Dendritic cell treated with granulocyte-macrophage colony-stimulating factor and Interleukin-4, amounts not matched to agents 40 ng/mL and 50 ng/mL, for 4 days (primary cell): ENCODE measurements at regions of chr17 and their contacts with region 1.

Region 1: DNA sequence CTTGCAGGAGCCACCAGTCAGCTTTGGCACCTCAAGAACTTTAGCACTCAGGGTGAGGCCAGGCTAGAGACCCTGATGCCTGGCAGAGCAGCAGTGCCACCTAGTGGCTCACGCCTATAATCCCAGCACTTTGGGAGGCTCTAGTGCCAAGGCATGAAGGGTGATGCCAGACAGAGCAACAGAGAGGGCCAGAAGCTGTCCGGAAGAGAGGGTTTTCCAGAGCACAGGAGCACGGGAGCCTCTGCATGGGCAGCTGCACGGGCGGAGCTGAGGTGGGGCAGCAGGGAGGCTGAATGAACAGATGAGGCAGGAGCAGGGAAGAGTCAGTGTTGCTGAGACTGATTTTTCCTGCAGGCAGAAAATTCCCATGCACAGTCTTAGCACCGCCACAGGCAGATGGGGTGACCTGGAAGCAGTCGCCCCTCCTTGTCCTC is 38.9 kb downstream of the MYH3 start:
- H3K4me3 Mint-ChIP-seq: no peak overlapping the region
- H3K27ac Mint-ChIP-seq: no peak overlapping the region
- H3K4me1 Mint-ChIP-seq: peaks cover 10% of the 10 kb centered on the region
- H3K27me3 Mint-ChIP-seq: no peaks in the 10 kb centered on the region

Region 2: GRCh38 chr17:9924735-9925191 is 693.5 kb before region 1 on chr17:
- intact Hi-C with region 1: loop called (anchors 10 kb)
- H3K4me3 Mint-ChIP-seq: no peak overlapping the region
- H3K27ac Mint-ChIP-seq: no peak overlapping the region
- H3K4me1 Mint-ChIP-seq: peaks cover 5% of the 10 kb centered on the region
- H3K27me3 Mint-ChIP-seq: no peaks in the 10 kb centered on the region

Region 3: DNA sequence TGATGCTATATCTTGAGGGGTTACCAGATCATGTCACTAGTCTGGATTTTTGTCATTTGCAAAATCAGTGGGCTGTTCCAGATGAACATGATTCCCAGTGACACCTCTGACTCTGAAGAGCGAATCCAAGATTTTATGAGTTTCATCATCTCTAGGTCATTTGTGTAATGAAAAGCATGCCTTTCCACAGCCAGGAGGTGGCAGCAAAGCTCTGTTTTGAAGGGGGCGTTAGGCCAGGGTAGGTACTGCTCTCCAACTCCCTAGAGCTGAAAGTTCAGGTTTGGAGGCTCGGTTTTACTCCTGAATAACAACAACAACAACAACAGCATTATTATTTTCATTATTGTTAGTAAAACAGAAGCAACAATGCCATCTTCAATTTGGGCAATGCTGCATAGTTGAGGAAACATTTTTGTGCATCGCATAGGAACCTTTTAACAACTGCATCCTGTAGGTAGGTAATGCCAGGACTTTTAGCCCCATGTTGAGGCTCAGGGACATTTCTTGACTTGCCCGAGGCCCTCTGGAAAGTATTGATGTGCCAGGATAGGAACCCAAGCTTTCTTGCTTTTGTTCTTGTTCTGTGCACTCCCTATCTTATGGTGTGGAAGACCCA is 322.4 kb before region 1 on chr17:
- intact Hi-C with region 1: loop called (anchors 2 kb)
- H3K4me3 Mint-ChIP-seq: no peak overlapping the region
- H3K27ac Mint-ChIP-seq: no peak overlapping the region
- H3K4me1 Mint-ChIP-seq: peaks cover 12% of the 10 kb centered on the region
- H3K27me3 Mint-ChIP-seq: peaks cover 13% of the 10 kb centered on the region

Region 4: GRCh38 chr17:10327640-10328039 is 290.6 kb before region 1 on chr17:
- intact Hi-C with region 1: loop called (anchors 5 kb)
- H3K4me3 Mint-ChIP-seq: no peak overlapping the region
- H3K27ac Mint-ChIP-seq: no peak overlapping the region
- H3K4me1 Mint-ChIP-seq: no peaks in the 10 kb centered on the region
- H3K27me3 Mint-ChIP-seq: peaks cover 17% of the 10 kb centered on the region

Region 5: DNA sequence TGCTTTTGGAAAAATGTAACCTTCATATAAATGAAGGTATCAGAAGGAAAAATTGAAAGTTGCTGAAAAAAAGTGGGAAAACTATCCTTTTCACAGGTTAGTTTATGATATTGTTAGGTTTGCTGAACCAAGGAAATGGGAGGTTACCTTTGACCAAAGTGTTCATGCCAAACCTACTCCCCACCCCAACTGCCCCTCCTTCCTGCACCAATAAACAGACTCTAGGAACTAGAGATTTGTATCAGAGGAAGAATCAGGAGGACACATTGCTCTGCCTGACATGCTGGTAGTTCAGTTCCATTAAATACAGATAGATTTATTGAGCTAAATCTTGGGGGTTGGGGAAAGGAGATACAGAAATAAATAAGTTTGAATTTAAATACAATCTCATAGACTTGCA is 214.6 kb before region 1 on chr17:
- intact Hi-C with region 1: no loop called
- H3K4me3 Mint-ChIP-seq: no peak overlapping the region
- H3K27ac Mint-ChIP-seq: no peak overlapping the region
- H3K4me1 Mint-ChIP-seq: no peaks in the 10 kb centered on the region
- H3K27me3 Mint-ChIP-seq: peaks cover 3% of the 10 kb centered on the region